ENCODE measurements at regions of chr5 and their contacts with region 1.

Region 1: GRCh38 chr5:171907725-171908343 is 98.6 kb downstream of the FBXW11 start:
- DNase-seq: peak; percentile 68
- ATAC-seq: peak; percentile 81
- H3K4me3 Mint-ChIP-seq: no peak overlapping the region
- H3K27ac Mint-ChIP-seq: peak overlapping the region; percentile 64
- H3K4me1 Mint-ChIP-seq: peaks cover 57% of the 10 kb centered on the region
- H3K27me3 Mint-ChIP-seq: no peaks in the 10 kb centered on the region

Region 2: DNA sequence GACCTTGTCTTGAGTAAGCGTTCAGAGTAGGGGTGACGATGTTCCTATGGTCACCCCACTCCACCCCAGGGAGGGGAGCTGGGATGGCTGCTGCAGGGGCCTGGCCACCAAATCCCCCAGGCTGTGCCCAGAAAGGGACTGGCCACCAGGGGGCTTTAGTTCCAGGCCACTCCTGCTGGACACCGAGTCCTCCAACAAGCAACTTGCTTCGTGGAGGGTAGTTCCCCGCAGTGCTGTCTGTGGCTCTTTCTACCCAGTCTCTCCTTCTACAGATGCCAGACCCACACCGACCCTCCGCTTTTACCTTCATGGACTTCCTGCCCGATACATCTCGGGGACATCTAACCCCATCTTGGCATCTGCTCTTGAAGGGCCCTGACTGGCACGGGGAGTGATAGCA is 1160.0 kb before region 1 on chr5:
- CTCF ChIA-PET with region 1: no interaction called
- POLR2A ChIA-PET with region 1: no interaction called
- intact Hi-C with region 1: loop called in 1 of 2 experiments (anchors 2 kb)
- DNase-seq: no peak
- ATAC-seq: no peak
- H3K4me3 Mint-ChIP-seq: no peak overlapping the region
- H3K27ac Mint-ChIP-seq: no peak overlapping the region
- H3K4me1 Mint-ChIP-seq: peaks cover 2% of the 10 kb centered on the region
- H3K27me3 Mint-ChIP-seq: peaks cover 38% of the 10 kb centered on the region

Region 3: GRCh38 chr5:170861837-170862766 is 1045.7 kb before region 1 on chr5 and contains the start of gene RANBP17:
- CTCF ChIA-PET with region 1: no interaction called
- POLR2A ChIA-PET with region 1: no interaction called
- intact Hi-C with region 1: no loop called
- DNase-seq: peak; percentile 7
- ATAC-seq: no peak
- H3K4me3 Mint-ChIP-seq: peak within 1 kb of the TSS; percentile 5
- H3K27ac Mint-ChIP-seq: no peak within 1 kb of the TSS
- H3K4me1 Mint-ChIP-seq: peaks cover 6% of the 10 kb centered on the region
- H3K27me3 Mint-ChIP-seq: peaks cover 44% of the 10 kb centered on the region
- total RNA-seq, gene RANBP17: not detected

Region 4: DNA sequence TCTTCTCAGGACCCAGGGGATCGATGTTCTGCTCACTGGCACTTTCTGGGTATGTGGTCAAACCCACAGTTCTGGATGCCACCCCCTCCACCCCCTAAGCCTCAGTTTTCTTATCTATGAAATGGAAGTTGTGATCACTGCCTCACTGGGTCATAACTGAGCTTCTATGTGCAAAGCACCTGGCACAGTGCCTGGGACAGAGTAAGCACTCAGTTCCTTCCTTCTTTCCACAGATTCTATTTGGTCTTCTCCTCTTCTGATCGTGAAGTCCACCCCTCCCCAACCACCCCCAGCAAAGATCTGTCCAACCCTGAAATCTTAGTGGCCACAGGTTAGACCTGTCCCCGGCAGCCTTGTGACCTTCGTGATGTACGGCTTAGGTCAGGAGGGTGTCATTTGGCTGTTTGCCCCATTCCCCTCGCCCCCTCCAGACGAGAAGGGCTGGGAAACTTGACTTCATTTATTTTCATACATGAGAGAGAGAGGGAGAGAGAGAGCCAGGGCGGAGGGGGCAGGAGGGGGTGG is 307.0 kb before region 1 on chr5:
- CTCF ChIA-PET with region 1: interaction called, 4 read pairs
- POLR2A ChIA-PET with region 1: no interaction called
- intact Hi-C with region 1: loop called (anchors 1 to 2 kb)
- DNase-seq: peak; percentile 32
- ATAC-seq: peak; percentile 13
- H3K4me3 Mint-ChIP-seq: peak overlapping the region; percentile 12
- H3K27ac Mint-ChIP-seq: peak overlapping the region; percentile 37
- H3K4me1 Mint-ChIP-seq: peaks cover 17% of the 10 kb centered on the region
- H3K27me3 Mint-ChIP-seq: peaks cover 27% of the 10 kb centered on the region

Region 5: GRCh38 chr5:171961117-171961516 is 53.3 kb after region 1 on chr5:
- CTCF ChIA-PET with region 1: interaction called, 15 read pairs
- POLR2A ChIA-PET with region 1: no interaction called
- intact Hi-C with region 1: loop called (anchors 1 to 2 kb)
- DNase-seq: peak; percentile 65
- ATAC-seq: peak; percentile 64
- H3K4me3 Mint-ChIP-seq: no peak overlapping the region
- H3K27ac Mint-ChIP-seq: peak overlapping the region; percentile 72
- H3K4me1 Mint-ChIP-seq: peaks cover 92% of the 10 kb centered on the region
- H3K27me3 Mint-ChIP-seq: no peaks in the 10 kb centered on the region

Region 6: GRCh38 chr5:172035039-172035438 is 127.2 kb after region 1 on chr5:
- CTCF ChIA-PET with region 1: interaction called, 55 read pairs
- POLR2A ChIA-PET with region 1: no interaction called
- intact Hi-C with region 1: loop called (anchors 1 kb)
- DNase-seq: peak; percentile 26
- ATAC-seq: peak; percentile 70
- H3K4me3 Mint-ChIP-seq: no peak overlapping the region
- H3K27ac Mint-ChIP-seq: no peak overlapping the region
- H3K4me1 Mint-ChIP-seq: peaks cover 14% of the 10 kb centered on the region
- H3K27me3 Mint-ChIP-seq: no peaks in the 10 kb centered on the region

Region 7: GRCh38 chr5:172245703-172246125 is 337.9 kb after region 1 on chr5:
- CTCF ChIA-PET with region 1: no interaction called
- POLR2A ChIA-PET with region 1: no interaction called
- intact Hi-C with region 1: no loop called
- DNase-seq: no peak
- ATAC-seq: no peak
- H3K4me3 Mint-ChIP-seq: no peak overlapping the region
- H3K27ac Mint-ChIP-seq: no peak overlapping the region
- H3K4me1 Mint-ChIP-seq: peaks cover 11% of the 10 kb centered on the region
- H3K27me3 Mint-ChIP-seq: no peaks in the 10 kb centered on the region

Region 8: GRCh38 chr5:172412724-172413286 is 505.0 kb after region 1 on chr5:
- CTCF ChIA-PET with region 1: no interaction called
- POLR2A ChIA-PET with region 1: no interaction called
- intact Hi-C with region 1: loop called in 1 of 2 experiments (anchors 2 kb)
- DNase-seq: peak; percentile 46
- ATAC-seq: peak; percentile 20
- H3K4me3 Mint-ChIP-seq: no peak overlapping the region
- H3K27ac Mint-ChIP-seq: peak overlapping the region; percentile 45
- H3K4me1 Mint-ChIP-seq: peaks cover 33% of the 10 kb centered on the region
- H3K27me3 Mint-ChIP-seq: peaks cover 7% of the 10 kb centered on the region